GM10248 (cell line): ENCODE measurements at regions of chr10 and their contacts with region 1.

Region 1: GRCh38 chr10:117143103-117143823 is 5.2 kb upstream of the VAX1 start:
- DNase-seq: no peak
- CTCF ChIP-seq: no peak

Region 2: GRCh38 chr10:117167789-117168674 is 24.8 kb after region 1 on chr10:
- CTCF ChIA-PET with region 1: interaction called, 10 read pairs
- POLR2A ChIA-PET with region 1: interaction called, 4 read pairs
- DNase-seq: peak; percentile 85
- CTCF ChIP-seq: peak; percentile 75

Region 3: GRCh38 chr10:117216611-117217195 is 73.4 kb after region 1 on chr10:
- CTCF ChIA-PET with region 1: no interaction called
- POLR2A ChIA-PET with region 1: no interaction called
- DNase-seq: peak; percentile 90
- CTCF ChIP-seq: peak; percentile 100